ENCODE measurements at regions of chrX and their contacts with region 1.

Region 1: GRCh38 chrX:107716816-107717700 is 58.5 kb downstream of the TSC22D3 start:
- DNase-seq: peak; percentile 91
- H3K4me3 Mint-ChIP-seq: peak overlapping the region; percentile 93
- H3K27ac Mint-ChIP-seq: peak overlapping the region; percentile 89
- H3K4me1 Mint-ChIP-seq: peaks cover 52% of the 10 kb centered on the region
- H3K27me3 Mint-ChIP-seq: no peaks in the 10 kb centered on the region

Region 2: DNA sequence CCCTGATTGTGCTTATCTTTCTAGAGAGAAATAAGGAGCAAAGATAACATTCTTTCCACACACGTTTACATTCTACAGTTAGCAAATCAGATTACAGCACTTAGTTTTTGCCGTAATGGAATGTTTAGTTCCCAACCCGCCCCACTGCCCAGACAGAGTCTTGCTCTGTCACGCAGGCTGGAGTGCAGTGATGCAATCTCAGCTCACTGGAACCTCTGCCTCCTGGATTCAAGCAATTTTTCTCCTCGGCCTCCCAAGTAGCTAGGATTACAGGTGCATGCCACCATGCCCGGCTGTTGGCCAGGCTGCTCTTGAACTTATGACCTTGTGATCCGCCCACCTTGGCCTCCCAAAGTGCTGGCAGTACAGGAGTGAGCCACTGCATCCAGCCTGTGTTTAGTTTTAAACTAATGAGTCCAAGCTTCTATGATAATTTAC is 97.2 kb before region 1 on chrX:
- CTCF ChIA-PET with region 1: no interaction called
- POLR2A ChIA-PET with region 1: no interaction called
- DNase-seq: no peak
- H3K4me3 Mint-ChIP-seq: no peak overlapping the region
- H3K27ac Mint-ChIP-seq: no peak overlapping the region
- H3K4me1 Mint-ChIP-seq: no peaks in the 10 kb centered on the region
- H3K27me3 Mint-ChIP-seq: peaks cover 2% of the 10 kb centered on the region

Region 3: DNA sequence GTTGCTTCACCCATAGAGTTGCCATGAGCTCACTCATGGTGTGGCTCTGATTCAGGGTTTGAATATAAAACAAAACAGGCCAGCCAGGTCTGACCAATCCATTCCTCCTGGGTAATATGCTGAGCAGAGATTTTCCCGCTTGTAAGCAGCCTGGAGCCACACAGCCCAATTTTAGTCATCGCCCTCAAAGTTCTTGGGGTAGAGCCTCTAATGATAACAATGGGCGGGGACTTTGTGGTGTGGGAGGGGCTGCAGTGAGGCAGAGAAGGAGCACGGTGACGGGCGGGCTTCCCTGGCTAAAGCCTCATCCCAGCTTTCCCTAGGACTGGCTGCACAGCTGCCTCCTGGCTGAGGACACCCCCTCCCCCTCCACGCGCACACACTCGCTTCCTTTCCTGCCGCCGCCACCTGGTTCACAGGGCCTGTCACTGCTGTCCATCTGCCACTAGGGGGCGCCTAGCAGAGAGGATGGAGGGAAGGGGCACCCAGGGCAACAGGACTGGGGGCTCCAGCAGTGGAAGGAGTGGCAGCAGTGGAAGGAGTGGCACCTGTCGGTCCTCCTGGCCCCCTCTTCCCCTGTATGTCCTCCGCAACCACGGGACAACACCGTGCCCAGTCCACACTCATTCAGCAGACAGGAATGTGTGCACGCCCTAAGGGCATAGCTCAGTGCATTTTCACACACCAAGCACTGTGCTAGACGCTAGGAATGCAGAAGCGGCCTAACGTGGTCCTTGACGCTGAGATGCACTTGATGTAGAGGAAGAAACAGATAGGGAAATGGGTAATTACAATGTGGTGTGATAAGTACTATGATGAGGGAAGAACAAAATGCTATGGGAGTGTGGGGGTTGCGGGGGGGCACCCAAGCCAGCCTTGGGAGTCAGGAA is 61.9 kb before region 1 on chrX:
- CTCF ChIA-PET with region 1: interaction called, 12 read pairs
- POLR2A ChIA-PET with region 1: interaction called, 14 read pairs
- DNase-seq: peak; percentile 66
- H3K4me3 Mint-ChIP-seq: no peak overlapping the region
- H3K27ac Mint-ChIP-seq: no peak overlapping the region
- H3K4me1 Mint-ChIP-seq: peaks cover 13% of the 10 kb centered on the region
- H3K27me3 Mint-ChIP-seq: no peaks in the 10 kb centered on the region

Region 4: GRCh38 chrX:107704181-107704580 is 12.9 kb before region 1 on chrX:
- CTCF ChIA-PET with region 1: interaction called, 3 read pairs
- POLR2A ChIA-PET with region 1: interaction called, 10 read pairs
- DNase-seq: no peak
- H3K4me3 Mint-ChIP-seq: no peak overlapping the region
- H3K27ac Mint-ChIP-seq: no peak overlapping the region
- H3K4me1 Mint-ChIP-seq: peaks cover 13% of the 10 kb centered on the region
- H3K27me3 Mint-ChIP-seq: no peaks in the 10 kb centered on the region

Region 5: GRCh38 chrX:107741404-107741790 is 24.3 kb after region 1 on chrX:
- CTCF ChIA-PET with region 1: interaction called, 3 read pairs
- POLR2A ChIA-PET with region 1: interaction called, 36 read pairs
- DNase-seq: no peak
- H3K4me3 Mint-ChIP-seq: peak overlapping the region; percentile 72
- H3K27ac Mint-ChIP-seq: peak overlapping the region; percentile 93
- H3K4me1 Mint-ChIP-seq: peaks cover 16% of the 10 kb centered on the region
- H3K27me3 Mint-ChIP-seq: no peaks in the 10 kb centered on the region

Region 6: DNA sequence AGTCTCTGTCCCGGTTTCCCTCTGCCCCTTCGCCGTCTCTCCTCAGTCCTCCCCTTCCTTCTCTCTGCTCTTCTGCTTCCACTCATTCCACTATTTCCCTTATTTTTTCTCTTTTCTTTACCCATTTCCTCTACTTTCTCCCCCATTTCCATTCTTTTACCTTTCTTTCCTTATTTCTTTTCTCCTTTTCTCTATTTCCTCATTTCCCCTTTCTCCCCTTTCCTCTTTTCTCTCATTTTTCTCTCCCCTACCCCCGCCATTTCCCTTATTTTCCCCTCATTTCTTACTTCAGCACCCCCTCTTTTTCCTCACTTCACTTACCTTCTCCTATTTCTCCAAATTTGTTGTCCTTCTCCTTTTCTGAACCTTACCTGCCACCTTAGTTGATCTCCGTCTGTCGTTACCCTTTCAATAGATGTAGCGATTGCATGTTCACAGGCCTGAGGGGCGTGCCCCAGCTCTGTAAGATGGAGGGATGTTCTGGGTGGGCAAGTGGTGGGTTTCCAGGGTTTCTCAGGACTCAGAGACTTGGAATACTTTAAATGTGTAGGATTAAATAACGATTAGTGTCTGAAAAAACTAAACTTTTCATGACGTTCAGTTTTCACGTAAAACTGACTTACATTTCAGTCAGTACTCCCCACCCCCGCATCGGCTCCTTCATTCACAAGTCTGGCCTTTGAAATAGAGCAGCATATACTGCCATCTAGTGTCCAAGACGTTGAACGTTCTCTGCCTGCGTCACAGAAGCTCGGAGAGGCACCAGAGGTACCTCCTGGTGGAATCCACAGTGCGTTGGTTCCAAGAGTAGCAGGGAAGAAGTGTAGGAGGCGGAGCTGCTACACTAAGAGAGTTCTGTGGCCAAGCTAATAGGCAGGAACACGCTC is 59.8 kb after region 1 on chrX:
- CTCF ChIA-PET with region 1: interaction called, 37 read pairs
- POLR2A ChIA-PET with region 1: interaction called, 27 read pairs
- DNase-seq: peak; percentile 74
- H3K4me3 Mint-ChIP-seq: peak overlapping the region; percentile 81
- H3K27ac Mint-ChIP-seq: no peak overlapping the region
- H3K4me1 Mint-ChIP-seq: peaks cover 13% of the 10 kb centered on the region
- H3K27me3 Mint-ChIP-seq: peaks cover 6% of the 10 kb centered on the region

Measured in activated CD4-positive, alpha-beta memory T cell treated with anti-CD3 and anti-CD28 coated beads, Interleukin-2, amount 10 ng/mL, durations not matched to agents 7 days and 5 days (primary cell).